ENCODE measurements at regions of chr17 and their contacts with region 1.

Region 1: DNA sequence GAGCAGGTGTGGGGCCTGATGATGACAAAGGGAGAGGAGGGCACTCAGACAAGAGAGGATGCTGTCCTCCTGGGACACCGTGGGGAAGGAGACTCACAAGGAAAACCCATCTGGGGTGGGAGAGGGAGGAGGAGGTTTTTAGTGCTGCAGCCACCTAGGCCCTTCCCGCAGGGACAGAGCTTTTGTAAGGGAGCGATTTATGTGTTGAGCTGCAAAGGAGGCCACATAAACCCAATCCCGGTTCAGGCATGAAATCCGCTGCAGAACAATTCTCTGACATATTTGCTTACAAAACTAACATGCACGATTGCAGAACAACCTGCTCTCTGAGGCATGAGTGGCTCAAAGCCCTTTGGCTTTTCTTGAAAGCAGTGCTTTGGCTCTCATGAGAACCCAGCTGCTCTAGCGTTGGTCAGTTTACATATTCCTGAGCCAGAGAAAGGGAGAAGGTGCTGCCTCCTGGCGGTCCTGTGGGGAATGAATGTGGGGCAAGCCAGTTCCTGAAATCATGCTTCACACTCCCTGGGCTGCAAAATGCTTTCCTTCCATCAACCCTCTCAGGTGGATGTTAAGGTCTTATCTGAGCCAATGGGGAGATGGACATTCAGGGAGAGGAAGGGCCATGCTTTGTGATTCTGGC is 122.4 kb upstream of the NLRP1 start:
- DNase-seq: peak; percentile 56
- H3K4me3 ChIP-seq: no peak overlapping the region; a peak in 1 of 4 replicates
- H3K27ac ChIP-seq: no peak overlapping the region
- H3K4me1 ChIP-seq: no peaks in the 10 kb centered on the region
- H3K27me3 ChIP-seq: peaks cover 10% of the 10 kb centered on the region; the same call in 1 of the 2 replicates
- CTCF ChIP-seq: peak; percentile 81
- EP300 ChIP-seq: no peak
- RAD21 ChIP-seq: peak; percentile 64

Region 2: GRCh38 chr17:5584383-5585286 is 122.1 kb before region 1 on chr17 and contains the start of gene NLRP1:
- CTCF ChIA-PET with region 1: interaction called, 28 read pairs
- POLR2A ChIA-PET with region 1: no interaction called
- DNase-seq: peak; percentile 35
- H3K4me3 ChIP-seq: peak within 1 kb of the TSS; percentile 34 to 61; a peak in 3 of 4 replicates
- H3K27ac ChIP-seq: peak within 1 kb of the TSS; percentile 51 to 86; a peak in 3 of 4 replicates
- H3K4me1 ChIP-seq: peaks cover 0 to 20% of the 10 kb centered on the region in 2 experiments; a peak in 3 of 4 replicates
- H3K27me3 ChIP-seq: no peaks in the 10 kb centered on the region
- CTCF ChIP-seq: no peak
- EP300 ChIP-seq: no peak
- RAD21 ChIP-seq: no peak
- polyA plus RNA-seq, gene NLRP1: 51.4 and 53.0 TPM in 2 replicates

Region 3: GRCh38 chr17:5592382-5592781 is 114.3 kb before region 1 on chr17:
- CTCF ChIA-PET with region 1: interaction called, 28 read pairs
- POLR2A ChIA-PET with region 1: no interaction called
- DNase-seq: peak; percentile 24
- H3K4me3 ChIP-seq: peak overlapping the region in 1 of 2 experiments; percentile 14; a peak in 1 of 4 replicates
- H3K27ac ChIP-seq: no peak overlapping the region
- H3K4me1 ChIP-seq: no peaks in the 10 kb centered on the region
- H3K27me3 ChIP-seq: no peaks in the 10 kb centered on the region; the same call in 1 of the 2 replicates
- CTCF ChIP-seq: peak; percentile 70
- EP300 ChIP-seq: no peak
- RAD21 ChIP-seq: peak; percentile 58

Region 4: DNA sequence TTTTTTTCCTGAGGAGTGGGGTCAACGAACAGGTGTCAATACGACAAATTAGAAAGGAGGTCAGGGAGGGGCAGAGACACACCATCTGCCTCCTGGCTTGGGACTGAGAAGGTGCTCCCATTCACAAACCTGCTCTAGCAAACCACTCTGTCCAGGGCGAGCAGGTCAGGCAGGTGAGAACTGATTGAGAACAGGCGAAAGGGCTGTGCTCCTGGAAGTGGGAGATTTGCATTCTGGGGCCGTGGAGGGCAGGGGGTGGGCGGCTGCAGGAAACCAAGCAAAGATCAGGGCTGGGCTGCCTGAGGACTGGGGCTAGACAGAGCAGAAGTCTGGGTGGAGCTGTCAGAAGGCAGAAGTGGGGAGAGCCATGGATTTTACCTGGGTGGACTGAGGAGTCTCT is 23.5 kb before region 1 on chr17:
- CTCF ChIA-PET with region 1: no interaction called
- POLR2A ChIA-PET with region 1: no interaction called
- DNase-seq: no peak
- H3K4me3 ChIP-seq: no peak overlapping the region
- H3K27ac ChIP-seq: no peak overlapping the region
- H3K4me1 ChIP-seq: no peaks in the 10 kb centered on the region
- H3K27me3 ChIP-seq: peaks cover 30% of the 10 kb centered on the region; the same call in 1 of the 2 replicates
- CTCF ChIP-seq: no peak
- EP300 ChIP-seq: no peak
- RAD21 ChIP-seq: no peak

Region 5: DNA sequence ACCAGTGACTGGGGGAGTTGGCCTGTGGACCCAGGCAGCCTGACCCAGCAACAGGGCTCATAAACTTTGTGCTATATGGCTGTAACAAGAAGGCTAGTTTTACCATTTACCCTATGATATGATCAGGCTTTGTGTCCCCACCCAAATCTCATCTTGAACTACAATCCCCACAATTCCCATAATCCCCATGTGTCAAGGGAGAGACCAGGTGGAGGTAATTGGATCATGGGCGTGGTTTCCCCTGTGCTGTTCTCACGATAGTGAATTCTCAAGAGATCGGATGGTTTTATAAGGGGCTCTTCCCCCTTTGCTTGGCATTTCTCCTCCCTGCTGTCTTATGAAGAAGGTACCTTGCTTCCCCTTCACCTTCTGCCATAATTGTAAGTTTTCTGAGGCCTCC is 11.2 kb before region 1 on chr17:
- CTCF ChIA-PET with region 1: interaction called, 18 read pairs
- POLR2A ChIA-PET with region 1: no interaction called
- DNase-seq: no peak
- H3K4me3 ChIP-seq: no peak overlapping the region
- H3K27ac ChIP-seq: no peak overlapping the region
- H3K4me1 ChIP-seq: no peaks in the 10 kb centered on the region
- H3K27me3 ChIP-seq: peaks cover 8% of the 10 kb centered on the region
- CTCF ChIP-seq: no peak
- EP300 ChIP-seq: no peak
- RAD21 ChIP-seq: no peak

Measured in SK-N-SH (cell line).